ENCODE measurements at regions of chr14 and their contacts with region 1.

Region 1: DNA sequence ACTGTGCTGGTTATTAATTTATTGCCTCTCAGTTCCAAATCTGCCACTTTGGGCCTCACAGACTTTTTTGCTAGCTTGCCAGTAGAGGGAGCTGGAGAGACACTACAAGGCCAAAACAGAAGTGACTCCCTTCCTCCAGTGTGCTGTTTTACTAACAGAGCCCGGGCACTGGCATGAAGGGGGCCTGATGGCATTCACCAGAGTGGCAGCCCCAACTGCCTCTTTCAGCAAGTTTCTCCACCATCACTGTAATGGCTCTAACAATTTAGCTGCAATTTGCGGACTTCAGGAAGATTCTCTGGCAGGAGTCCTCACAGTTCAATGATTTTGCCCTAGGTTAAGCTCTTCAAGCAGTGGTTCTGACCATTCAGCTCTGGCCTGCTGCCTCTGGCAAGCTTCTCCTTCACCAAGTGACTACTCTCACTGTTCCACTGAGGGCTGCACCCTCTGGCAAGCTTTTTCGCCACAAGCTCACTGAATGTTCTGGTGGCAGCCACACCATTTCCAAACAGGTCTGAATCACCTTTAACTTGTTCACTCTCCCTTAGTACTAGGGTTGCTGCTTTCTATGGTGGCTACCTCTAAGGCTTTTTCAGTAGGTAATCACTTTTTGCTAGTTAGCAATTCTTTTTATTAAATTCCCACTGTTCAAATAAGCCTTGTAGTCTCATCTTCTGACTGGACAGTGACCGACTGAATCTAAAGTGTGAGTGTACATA is 104.9 kb downstream of the ZC3H14 start:
- DNase-seq: peak; percentile 44 to 70 (median 62)
- ATAC-seq: peak; percentile 90
- H3K4me3 ChIP-seq: no peak overlapping the region
- H3K27ac ChIP-seq: no peak overlapping the region
- H3K4me1 ChIP-seq: no peaks in the 10 kb centered on the region
- H3K27me3 ChIP-seq: no peaks in the 10 kb centered on the region
- CTCF ChIP-seq: peak; percentile 67 to 86 (median 78)
- POLR2A ChIP-seq: no peak

Region 2: DNA sequence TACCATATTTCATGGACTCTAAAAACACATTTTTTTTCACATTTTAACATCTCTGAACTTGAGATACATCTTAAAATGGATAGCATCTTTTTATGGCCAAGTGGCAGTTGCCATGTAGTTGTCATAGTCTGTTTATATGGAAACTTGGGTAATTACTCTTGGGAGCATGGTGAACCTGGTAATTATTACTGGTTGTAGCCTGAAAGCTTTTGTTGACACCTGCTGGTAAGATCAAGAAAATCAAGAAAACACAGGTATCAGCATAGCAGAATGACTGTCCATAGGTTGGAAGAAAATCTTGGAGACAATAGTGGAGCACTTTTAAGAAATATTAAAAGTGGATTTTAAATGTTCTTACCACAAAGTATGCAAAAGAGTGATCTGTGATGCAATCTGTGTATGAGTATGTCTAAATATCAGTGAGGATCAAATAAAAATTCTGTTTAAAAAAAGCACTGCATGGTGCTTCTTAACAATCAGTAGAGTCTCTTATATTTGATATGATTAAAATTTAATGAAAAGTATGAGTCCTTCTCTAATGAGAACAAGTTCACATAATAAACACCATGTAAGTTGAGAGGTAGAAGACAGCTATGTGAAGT is 200.9 kb after region 1 on chr14:
- intact Hi-C with region 1: loop called (anchors 5 kb)
- DNase-seq: no peak
- ATAC-seq: peak; percentile 59
- H3K4me3 ChIP-seq: no peak overlapping the region
- H3K27ac ChIP-seq: no peak overlapping the region
- H3K4me1 ChIP-seq: no peaks in the 10 kb centered on the region
- H3K27me3 ChIP-seq: no peaks in the 10 kb centered on the region
- CTCF ChIP-seq: peak in 6 of 7 experiments; percentile 12 to 58 (median 44)
- POLR2A ChIP-seq: no peak